Activated B cell treated with CpG ODN at 0.5 μM for 24 hours (primary cell): ENCODE measurements at regions of chr3 and their contacts with region 1.

Region 1: GRCh38 chr3:197791113-197791891 is at the start of gene LRCH3:
- DNase-seq: peak; percentile 84
- ATAC-seq: peak; percentile 73
- H3K4me3 Mint-ChIP-seq: peak within 1 kb of the TSS; percentile 86
- H3K27ac Mint-ChIP-seq: peak within 1 kb of the TSS; percentile 97
- H3K4me1 Mint-ChIP-seq: peaks cover 63% of the 10 kb centered on the region
- H3K27me3 Mint-ChIP-seq: no peaks in the 10 kb centered on the region
- CTCF ChIP-seq: no peak
- total RNA-seq, gene LRCH3: 94.1 and 96.1 TPM in 2 replicates

Region 2: GRCh38 chr3:197736491-197737318 is 54.6 kb before region 1 on chr3 and contains the start of gene RUBCN:
- CTCF ChIA-PET with region 1: no interaction called
- POLR2A ChIA-PET with region 1: interaction called, 26 read pairs
- intact Hi-C with region 1: loop called (anchors 1 kb)
- DNase-seq: peak; percentile 88
- ATAC-seq: peak; percentile 87
- H3K4me3 Mint-ChIP-seq: peak within 1 kb of the TSS; percentile 94
- H3K27ac Mint-ChIP-seq: peak within 1 kb of the TSS; percentile 98
- H3K4me1 Mint-ChIP-seq: peaks cover 58% of the 10 kb centered on the region
- H3K27me3 Mint-ChIP-seq: no peaks in the 10 kb centered on the region
- CTCF ChIP-seq: no peak
- total RNA-seq, gene RUBCN: 196 and 217 TPM in 2 replicates

Region 3: GRCh38 chr3:197847866-197848401 is 56.6 kb after region 1 on chr3:
- CTCF ChIA-PET with region 1: no interaction called
- POLR2A ChIA-PET with region 1: interaction called, 8 read pairs
- intact Hi-C with region 1: loop called (anchors 1 kb)
- DNase-seq: no peak
- ATAC-seq: peak; percentile 96
- H3K4me3 Mint-ChIP-seq: peak overlapping the region; percentile 76
- H3K27ac Mint-ChIP-seq: peak overlapping the region; percentile 92
- H3K4me1 Mint-ChIP-seq: peaks cover 19% of the 10 kb centered on the region
- H3K27me3 Mint-ChIP-seq: no peaks in the 10 kb centered on the region
- CTCF ChIP-seq: no peak